PC-3 (cell line): ENCODE measurements at regions of chr15 and their contacts with region 1.

Region 1: DNA sequence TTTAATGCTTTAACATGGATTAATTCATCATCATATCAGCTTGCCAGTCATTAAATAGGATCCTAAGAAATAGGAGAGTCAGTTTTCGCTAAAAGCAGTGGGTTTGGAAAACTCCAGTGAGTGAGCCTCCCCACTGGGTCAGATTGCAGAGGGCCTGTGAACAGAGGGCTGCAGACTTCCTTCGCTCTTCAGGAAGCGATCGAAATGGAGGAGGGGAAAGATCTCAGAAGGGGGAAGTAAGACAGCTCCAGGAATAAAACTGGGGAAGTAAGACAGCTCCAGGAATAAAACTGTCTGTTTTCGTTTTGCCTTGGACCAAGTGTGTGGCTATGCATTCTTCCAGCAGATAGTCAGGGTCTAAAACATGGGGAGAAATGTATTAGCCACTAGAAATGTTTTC is 124.8 kb upstream of the C15orf61 start:
- DNase-seq: no peak
- ATAC-seq: no peak
- H3K4me3 ChIP-seq: no peak overlapping the region
- H3K27ac ChIP-seq: no peak overlapping the region
- H3K4me1 ChIP-seq: no peaks in the 10 kb centered on the region
- H3K27me3 ChIP-seq: no peaks in the 10 kb centered on the region
- CTCF ChIP-seq: no peak

Region 2: GRCh38 chr15:67267951-67268941 is 127.9 kb before region 1 on chr15:
- CTCF ChIA-PET with region 1: no interaction called
- POLR2A ChIA-PET with region 1: no interaction called
- intact Hi-C with region 1: no loop called
- DNase-seq: no peak
- ATAC-seq: no peak
- H3K4me3 ChIP-seq: no peak overlapping the region
- H3K27ac ChIP-seq: no peak overlapping the region
- H3K4me1 ChIP-seq: no peaks in the 10 kb centered on the region
- H3K27me3 ChIP-seq: no peaks in the 10 kb centered on the region
- CTCF ChIP-seq: no peak

Region 3: DNA sequence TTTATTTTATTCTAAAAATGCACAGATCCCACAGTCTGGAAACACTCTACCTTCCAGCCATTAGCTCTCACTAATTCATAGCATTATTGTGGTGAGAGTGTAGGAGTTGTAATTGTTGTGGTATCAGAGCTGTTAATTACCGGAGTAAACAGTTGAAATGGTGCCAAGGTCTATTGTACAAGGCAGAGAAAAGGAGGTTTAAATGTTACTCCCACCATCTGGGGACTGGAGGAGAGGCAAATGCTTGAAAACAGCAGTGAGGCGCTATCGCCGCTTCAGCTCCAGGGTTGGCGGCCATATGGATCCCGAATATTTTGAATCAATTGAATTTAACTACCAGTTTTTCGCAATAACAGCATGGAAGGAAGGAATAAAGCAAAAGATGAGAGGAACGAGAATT is 11.7 kb after region 1 on chr15:
- CTCF ChIA-PET with region 1: no interaction called
- POLR2A ChIA-PET with region 1: interaction called, 13 read pairs
- intact Hi-C with region 1: no loop called
- DNase-seq: no peak
- ATAC-seq: no peak
- H3K4me3 ChIP-seq: no peak overlapping the region
- H3K27ac ChIP-seq: no peak overlapping the region
- H3K4me1 ChIP-seq: no peaks in the 10 kb centered on the region; the same call in 1 of the 2 replicates
- H3K27me3 ChIP-seq: no peaks in the 10 kb centered on the region
- CTCF ChIP-seq: no peak